ENCODE measurements at regions of chr1 and their contacts with region 1.

Region 1: DNA sequence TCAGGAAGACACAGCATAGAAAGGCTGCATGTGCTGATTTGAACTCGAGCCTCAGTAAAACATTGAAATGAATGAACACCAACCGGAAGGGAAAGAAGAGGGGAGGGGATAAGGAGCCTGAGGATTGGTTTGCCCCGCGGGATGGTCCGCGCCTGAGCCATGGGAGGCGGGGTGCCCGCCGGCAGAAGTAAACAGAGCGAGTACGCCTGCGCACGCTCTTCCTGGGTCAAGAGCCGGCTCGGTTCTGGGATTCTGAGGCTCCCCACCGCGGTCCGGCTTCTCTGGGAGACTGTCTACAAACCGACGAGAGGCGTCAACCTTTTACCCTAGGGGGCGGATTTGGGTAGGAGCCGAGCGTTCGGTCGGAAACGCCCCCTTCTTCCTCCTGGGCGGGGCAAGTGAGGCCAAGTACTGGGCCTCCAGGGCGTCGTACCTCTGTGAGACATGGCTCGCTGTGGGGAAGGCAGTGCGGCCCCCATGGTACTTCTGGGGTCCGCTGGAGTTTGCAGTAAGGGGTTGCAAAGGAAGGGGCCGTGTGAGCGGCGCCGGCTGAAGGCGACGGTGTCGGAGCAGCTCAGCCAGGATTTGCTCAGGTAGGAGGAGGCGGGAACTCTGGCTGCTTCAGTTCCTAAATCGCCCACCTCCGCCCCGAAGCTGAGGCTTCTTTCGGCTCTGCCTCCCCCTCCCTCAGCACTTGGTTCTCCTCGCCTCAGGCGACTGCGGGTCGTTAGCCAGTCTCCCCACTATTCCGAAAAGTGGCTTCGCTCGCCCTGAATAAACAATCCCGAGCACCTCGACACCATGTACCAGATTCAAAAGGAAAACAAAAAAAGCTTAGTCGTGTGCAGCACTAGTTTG is at the start of gene BTBD8:
- DNase-seq: peak; percentile 75 to 90 (median 82)
- ATAC-seq: peak; percentile 94 to 97 (median 96)
- H3K4me3 ChIP-seq: peak within 1 kb of the TSS; percentile 61 to 93 (median 78)
- H3K27ac ChIP-seq: peak within 1 kb of the TSS; percentile 4 to 80 (median 66)
- H3K4me1 ChIP-seq: peaks cover 0 to 16% (median 4%) of the 10 kb centered on the region in 12 donors
- H3K27me3 ChIP-seq: no peaks in the 10 kb centered on the region
- CTCF ChIP-seq: peak in 2 of 12 donors; percentile 9 to 26
- POLR2A ChIP-seq: peak in 1 of 2 donors; percentile 60
- total RNA-seq, gene BTBD8: 1.8 to 7.7 (median 5.1) TPM

Region 2: GRCh38 chr1:92030656-92031107 is 49.7 kb before region 1 on chr1:
- intact Hi-C with region 1: loop called in 1 of 10 experiments (anchors 2 kb)
- DNase-seq: no peak
- ATAC-seq: peak in 1 of 4 donors; percentile 77
- H3K4me3 ChIP-seq: peak overlapping the region in 7 of 12 donors; percentile 2 to 64 (median 55)
- H3K27ac ChIP-seq: no peak overlapping the region
- H3K4me1 ChIP-seq: peaks cover 0 to 9% (median 0%) of the 10 kb centered on the region in 12 donors
- H3K27me3 ChIP-seq: peaks cover 0 to 23% (median 0%) of the 10 kb centered on the region in 9 donors
- CTCF ChIP-seq: no peak
- POLR2A ChIP-seq: no peak

Measured in heart left ventricle (tissue), 16 donors.